ENCODE measurements at regions of chr17 and their contacts with region 1.

Region 1: GRCh38 chr17:73731733-73732132 is 87.5 kb upstream of the SDK2 start:
- DNase-seq: no peak
- ATAC-seq: no peak
- H3K4me3 ChIP-seq: no peak overlapping the region
- H3K27ac ChIP-seq: no peak overlapping the region
- H3K4me1 ChIP-seq: no peaks in the 10 kb centered on the region
- H3K27me3 ChIP-seq: peaks cover 23% of the 10 kb centered on the region
- CTCF ChIP-seq: no peak

Region 2: GRCh38 chr17:73759734-73760438 is 28.2 kb after region 1 on chr17:
- CTCF ChIA-PET with region 1: no interaction called
- POLR2A ChIA-PET with region 1: interaction called, 11 read pairs
- in situ Hi-C with region 1: no loop called
- intact Hi-C with region 1: no loop called
- DNase-seq: no peak
- ATAC-seq: no peak
- H3K4me3 ChIP-seq: no peak overlapping the region
- H3K27ac ChIP-seq: no peak overlapping the region
- H3K4me1 ChIP-seq: no peaks in the 10 kb centered on the region
- H3K27me3 ChIP-seq: peaks cover 23% of the 10 kb centered on the region; the same call in 1 of the 2 replicates
- CTCF ChIP-seq: no peak

Measured in Panc1 (cell line).